B cell (primary cell): ENCODE measurements at regions of chrX and their contacts with region 1.

Region 1: GRCh38 chrX:19863212-19863856 is 24.1 kb downstream of the SH3KBP1 start:
- DNase-seq: no peak
- ATAC-seq: peak; percentile 69
- H3K4me3 ChIP-seq: peak overlapping the region in 4 of 5 experiments; percentile 0 to 37 (median 20)
- H3K4me3 Mint-ChIP-seq: peak overlapping the region; percentile 90
- H3K27ac ChIP-seq: peak overlapping the region; percentile 80 to 84
- H3K27ac Mint-ChIP-seq: peak overlapping the region; percentile 98
- H3K4me1 ChIP-seq: peaks cover 80 to 83% of the 10 kb centered on the region in 2 donors
- H3K4me1 Mint-ChIP-seq: peaks cover 86% of the 10 kb centered on the region
- H3K27me3 ChIP-seq: no peaks in the 10 kb centered on the region
- H3K27me3 Mint-ChIP-seq: no peaks in the 10 kb centered on the region
- CTCF ChIP-seq: no peak

Region 2: GRCh38 chrX:18917831-18918230 is 945.5 kb before region 1 on chrX:
- CTCF ChIA-PET with region 1: no interaction called
- POLR2A ChIA-PET with region 1: no interaction called
- intact Hi-C with region 1: no loop called
- DNase-seq: no peak
- ATAC-seq: no peak
- H3K4me3 ChIP-seq: no peak overlapping the region
- H3K4me3 Mint-ChIP-seq: no peak overlapping the region
- H3K27ac ChIP-seq: no peak overlapping the region
- H3K27ac Mint-ChIP-seq: no peak overlapping the region
- H3K4me1 ChIP-seq: no peaks in the 10 kb centered on the region
- H3K4me1 Mint-ChIP-seq: no peaks in the 10 kb centered on the region
- H3K27me3 ChIP-seq: no peaks in the 10 kb centered on the region
- H3K27me3 Mint-ChIP-seq: no peaks in the 10 kb centered on the region
- CTCF ChIP-seq: no peak

Region 3: GRCh38 chrX:19799319-19800182 is 63.8 kb before region 1 on chrX:
- CTCF ChIA-PET with region 1: no interaction called
- POLR2A ChIA-PET with region 1: no interaction called
- intact Hi-C with region 1: loop called (anchors 5 kb)
- DNase-seq: no peak
- ATAC-seq: no peak
- H3K4me3 ChIP-seq: no peak overlapping the region
- H3K4me3 Mint-ChIP-seq: peak overlapping the region; percentile 60
- H3K27ac ChIP-seq: peak overlapping the region; percentile 29 to 52
- H3K27ac Mint-ChIP-seq: peak overlapping the region; percentile 82
- H3K4me1 ChIP-seq: peaks cover 21 to 37% of the 10 kb centered on the region in 2 donors
- H3K4me1 Mint-ChIP-seq: peaks cover 61% of the 10 kb centered on the region
- H3K27me3 ChIP-seq: no peaks in the 10 kb centered on the region
- H3K27me3 Mint-ChIP-seq: no peaks in the 10 kb centered on the region
- CTCF ChIP-seq: no peak

Region 4: DNA sequence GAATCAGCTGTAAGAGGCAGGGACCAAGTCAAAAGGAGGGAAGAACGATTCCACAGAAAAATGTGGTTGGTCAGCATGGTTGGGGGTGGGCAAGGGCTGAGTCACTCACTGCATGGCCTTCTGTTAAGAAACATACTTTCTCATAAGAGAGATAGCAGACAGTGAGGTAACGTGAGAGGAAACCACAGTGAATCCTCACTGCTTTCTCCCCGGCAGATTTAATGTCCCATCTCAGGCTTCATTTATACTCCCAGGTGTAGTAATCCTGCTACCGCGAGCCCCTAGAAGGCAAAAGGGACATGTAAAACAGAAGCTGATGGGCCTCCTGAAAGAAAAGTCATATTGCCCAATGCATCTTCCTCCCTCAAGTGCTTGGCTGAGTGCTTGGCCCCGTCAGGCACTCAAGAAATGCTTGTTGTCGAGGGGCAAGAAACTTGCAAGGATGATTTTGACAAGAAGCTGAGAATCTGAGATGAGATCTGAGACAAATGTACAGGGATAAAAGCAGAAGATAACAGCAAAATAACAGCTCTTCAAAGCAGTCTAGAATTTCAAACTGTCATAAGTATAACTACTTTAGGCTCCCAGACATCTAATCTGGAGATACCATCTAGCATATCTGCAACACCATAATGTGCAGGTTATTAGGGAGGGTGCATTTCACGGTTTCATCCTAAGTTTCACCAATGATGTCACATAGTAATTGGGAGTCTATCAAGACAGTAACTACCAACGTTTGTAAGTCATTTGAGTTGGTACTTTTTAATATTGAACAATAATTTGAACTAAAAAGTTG is 16.1 kb before region 1 on chrX:
- CTCF ChIA-PET with region 1: interaction called, 4 read pairs
- POLR2A ChIA-PET with region 1: interaction called, 4 read pairs
- intact Hi-C with region 1: loop called (anchors 2 kb)
- DNase-seq: no peak
- ATAC-seq: no peak
- H3K4me3 ChIP-seq: no peak overlapping the region
- H3K4me3 Mint-ChIP-seq: peak overlapping the region; percentile 67
- H3K27ac ChIP-seq: peak overlapping the region in 1 of 2 donors; percentile 61
- H3K27ac Mint-ChIP-seq: peak overlapping the region; percentile 85
- H3K4me1 ChIP-seq: peaks cover 28 to 48% of the 10 kb centered on the region in 2 donors
- H3K4me1 Mint-ChIP-seq: peaks cover 62% of the 10 kb centered on the region
- H3K27me3 ChIP-seq: no peaks in the 10 kb centered on the region
- H3K27me3 Mint-ChIP-seq: no peaks in the 10 kb centered on the region
- CTCF ChIP-seq: no peak

Region 5: DNA sequence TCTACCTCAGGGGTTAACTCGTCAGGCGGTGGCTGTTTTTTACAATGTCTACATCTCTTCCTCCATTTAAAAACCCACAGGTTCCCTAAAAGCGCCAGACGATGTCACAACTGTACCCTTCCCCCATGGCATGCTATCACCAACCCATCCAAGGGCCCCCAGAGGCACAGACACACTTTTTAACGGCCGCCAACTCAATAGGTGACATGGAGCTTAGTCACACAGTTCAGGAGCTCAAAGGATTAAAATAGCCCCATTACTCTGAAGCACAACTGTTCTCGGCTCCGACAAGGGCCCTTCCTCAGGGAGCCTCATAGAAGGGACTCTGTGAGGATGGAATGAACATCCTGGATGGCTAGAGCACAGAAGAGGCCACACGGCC is 11.7 kb after region 1 on chrX:
- CTCF ChIA-PET with region 1: interaction called, 4 read pairs
- POLR2A ChIA-PET with region 1: no interaction called
- intact Hi-C with region 1: loop called (anchors 1 kb)
- DNase-seq: peak; percentile 76
- ATAC-seq: peak; percentile 80
- H3K4me3 ChIP-seq: peak overlapping the region in 4 of 5 experiments; percentile 30 to 39 (median 32)
- H3K4me3 Mint-ChIP-seq: peak overlapping the region; percentile 74
- H3K27ac ChIP-seq: peak overlapping the region; percentile 26 to 83
- H3K27ac Mint-ChIP-seq: peak overlapping the region; percentile 90
- H3K4me1 ChIP-seq: peaks cover 68 to 75% of the 10 kb centered on the region in 2 donors
- H3K4me1 Mint-ChIP-seq: peaks cover 72% of the 10 kb centered on the region
- H3K27me3 ChIP-seq: no peaks in the 10 kb centered on the region
- H3K27me3 Mint-ChIP-seq: no peaks in the 10 kb centered on the region
- CTCF ChIP-seq: no peak

Region 6: DNA sequence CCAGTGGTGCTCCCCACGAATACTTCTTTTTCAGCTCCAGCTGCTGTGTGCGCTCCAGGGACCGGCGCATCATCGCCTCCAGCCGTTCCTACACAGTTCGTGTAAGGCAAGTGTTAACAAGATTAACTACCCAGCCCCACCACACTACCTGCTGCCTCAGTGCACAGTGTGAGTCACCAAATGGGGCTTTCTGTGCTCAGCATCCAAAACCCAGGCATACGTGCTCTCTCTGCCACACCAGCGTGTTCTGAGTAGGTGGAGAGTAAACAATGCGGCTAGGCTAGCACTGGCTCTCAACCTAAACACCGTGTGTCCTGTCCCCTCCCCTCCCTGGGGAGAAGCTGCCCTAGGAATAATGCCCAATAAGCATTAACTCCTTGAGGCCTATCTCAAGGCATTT is 193.4 kb after region 1 on chrX:
- CTCF ChIA-PET with region 1: no interaction called
- POLR2A ChIA-PET with region 1: no interaction called
- intact Hi-C with region 1: no loop called
- DNase-seq: no peak
- ATAC-seq: no peak
- H3K4me3 ChIP-seq: no peak overlapping the region
- H3K4me3 Mint-ChIP-seq: no peak overlapping the region
- H3K27ac ChIP-seq: no peak overlapping the region
- H3K27ac Mint-ChIP-seq: no peak overlapping the region
- H3K4me1 ChIP-seq: peaks cover 15 to 21% of the 10 kb centered on the region in 2 donors
- H3K4me1 Mint-ChIP-seq: peaks cover 18% of the 10 kb centered on the region
- H3K27me3 ChIP-seq: no peaks in the 10 kb centered on the region
- H3K27me3 Mint-ChIP-seq: no peaks in the 10 kb centered on the region
- CTCF ChIP-seq: no peak